GM12878 (cell line): ENCODE measurements at regions of chr11 and their contacts with region 1.

Region 1: GRCh38 chr11:3929649-3930048 is 74.2 kb downstream of the STIM1 start:
- DNase-seq: no peak
- ATAC-seq: no peak
- H3K4me3 ChIP-seq: no peak overlapping the region
- H3K27ac ChIP-seq: no peak overlapping the region
- H3K4me1 ChIP-seq: peaks cover 14% of the 10 kb centered on the region
- H3K27me3 ChIP-seq: no peaks in the 10 kb centered on the region
- CTCF ChIP-seq: no peak
- EP300 ChIP-seq: no peak
- POLR2A ChIP-seq: no peak
- RAD21 ChIP-seq: no peak

Region 2: DNA sequence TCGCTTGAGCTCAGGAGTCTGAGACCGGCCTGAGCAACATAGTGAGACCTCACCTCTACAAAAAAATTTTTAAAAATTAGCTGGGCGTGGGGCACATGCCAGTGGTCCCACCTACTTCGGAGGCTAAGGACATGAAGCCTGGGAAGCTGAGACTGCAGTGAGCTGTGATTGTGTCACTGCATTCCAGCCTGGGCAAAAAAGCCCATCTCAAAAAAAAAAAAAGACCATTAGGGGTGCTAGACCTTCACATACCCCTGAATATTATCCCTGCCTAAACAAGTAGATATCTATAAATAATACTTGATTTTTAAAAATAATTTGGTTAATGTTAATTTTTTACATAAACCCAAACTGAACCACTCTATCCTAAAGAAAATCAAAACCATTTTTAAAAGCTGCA is 156.5 kb before region 1 on chr11:
- CTCF ChIA-PET with region 1: no interaction called
- POLR2A ChIA-PET with region 1: no interaction called
- RAD21 ChIA-PET with region 1: no interaction called
- SMC1A ChIA-PET with region 1: no interaction called
- in situ Hi-C with region 1: no loop called
- intact Hi-C with region 1: no loop called
- DNase-seq: no peak
- ATAC-seq: no peak
- H3K4me3 ChIP-seq: no peak overlapping the region
- H3K27ac ChIP-seq: no peak overlapping the region
- H3K4me1 ChIP-seq: no peaks in the 10 kb centered on the region
- H3K27me3 ChIP-seq: no peaks in the 10 kb centered on the region
- CTCF ChIP-seq: no peak
- EP300 ChIP-seq: no peak
- POLR2A ChIP-seq: no peak
- RAD21 ChIP-seq: no peak

Region 3: DNA sequence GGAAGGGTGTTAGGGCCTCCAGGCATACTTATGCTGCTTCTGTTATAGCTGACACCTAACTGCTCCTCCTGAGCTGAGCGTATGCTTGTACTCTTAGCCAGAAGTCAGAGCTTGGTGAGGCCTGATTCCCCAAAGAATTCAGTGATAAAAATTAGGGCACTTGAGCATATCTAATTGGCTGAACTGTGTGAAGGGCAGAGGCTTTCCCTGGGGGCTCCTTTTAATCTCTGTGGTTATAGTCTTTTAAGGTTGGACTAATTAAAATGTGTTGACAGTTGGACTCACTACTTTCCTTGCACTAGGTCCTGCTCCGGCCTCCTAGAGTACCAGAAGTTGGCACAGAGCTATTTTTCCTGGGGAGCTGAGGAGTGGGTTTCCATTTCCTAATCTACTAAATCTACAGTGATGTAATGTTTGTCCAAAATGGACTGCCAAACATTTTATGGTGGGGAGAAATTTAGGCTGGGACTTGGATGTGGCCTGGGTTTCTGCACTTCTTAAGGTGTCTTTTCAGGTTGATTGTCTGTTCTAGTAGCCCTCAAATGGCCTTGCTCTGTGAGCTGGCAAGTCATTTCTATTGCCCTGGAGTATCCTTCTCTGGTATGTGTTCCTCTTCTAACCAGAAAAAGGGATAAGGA is 55.8 kb before region 1 on chr11:
- CTCF ChIA-PET with region 1: interaction called, 11 read pairs
- POLR2A ChIA-PET with region 1: no interaction called
- RAD21 ChIA-PET with region 1: interaction called, 3 read pairs
- SMC1A ChIA-PET with region 1: interaction called, 14 read pairs
- in situ Hi-C with region 1: no loop called
- intact Hi-C with region 1: no loop called
- DNase-seq: no peak
- ATAC-seq: no peak
- H3K4me3 ChIP-seq: no peak overlapping the region
- H3K27ac ChIP-seq: no peak overlapping the region
- H3K4me1 ChIP-seq: peaks cover 50% of the 10 kb centered on the region
- H3K27me3 ChIP-seq: no peaks in the 10 kb centered on the region
- CTCF ChIP-seq: no peak
- EP300 ChIP-seq: no peak
- POLR2A ChIP-seq: no peak
- RAD21 ChIP-seq: no peak

Region 4: GRCh38 chr11:3905080-3905953 is 24.3 kb before region 1 on chr11:
- CTCF ChIA-PET with region 1: interaction called, 7 read pairs
- POLR2A ChIA-PET with region 1: no interaction called
- RAD21 ChIA-PET with region 1: interaction called, 7 read pairs
- SMC1A ChIA-PET with region 1: interaction called, 29 read pairs
- in situ Hi-C with region 1: no loop called
- intact Hi-C with region 1: no loop called
- DNase-seq: no peak
- ATAC-seq: peak; percentile 89
- H3K4me3 ChIP-seq: no peak overlapping the region
- H3K27ac ChIP-seq: no peak overlapping the region
- H3K4me1 ChIP-seq: peaks cover 51% of the 10 kb centered on the region
- H3K27me3 ChIP-seq: no peaks in the 10 kb centered on the region
- CTCF ChIP-seq: no peak
- EP300 ChIP-seq: no peak
- POLR2A ChIP-seq: no peak
- RAD21 ChIP-seq: no peak

Region 5: GRCh38 chr11:3959015-3959919 is 29.6 kb after region 1 on chr11:
- CTCF ChIA-PET with region 1: interaction called, 29 read pairs
- POLR2A ChIA-PET with region 1: no interaction called
- RAD21 ChIA-PET with region 1: no interaction called
- SMC1A ChIA-PET with region 1: interaction called, 3 read pairs
- in situ Hi-C with region 1: no loop called
- intact Hi-C with region 1: no loop called
- DNase-seq: no peak
- ATAC-seq: peak; percentile 89
- H3K4me3 ChIP-seq: no peak overlapping the region
- H3K27ac ChIP-seq: no peak overlapping the region
- H3K4me1 ChIP-seq: peaks cover 4% of the 10 kb centered on the region; the same call in 1 of the 2 replicates
- H3K27me3 ChIP-seq: no peaks in the 10 kb centered on the region
- CTCF ChIP-seq: peak; percentile 25 to 32 (median 30); a peak in 3 of 6 replicates
- EP300 ChIP-seq: no peak
- POLR2A ChIP-seq: no peak
- RAD21 ChIP-seq: peak; percentile 41; the same call in 1 of the 2 replicates

Region 6: GRCh38 chr11:4381901-4382300 is 452.3 kb after region 1 on chr11:
- CTCF ChIA-PET with region 1: no interaction called
- POLR2A ChIA-PET with region 1: no interaction called
- RAD21 ChIA-PET with region 1: no interaction called
- SMC1A ChIA-PET with region 1: no interaction called
- in situ Hi-C with region 1: no loop called
- intact Hi-C with region 1: no loop called
- DNase-seq: no peak
- ATAC-seq: no peak
- H3K4me3 ChIP-seq: no peak overlapping the region
- H3K27ac ChIP-seq: no peak overlapping the region
- H3K4me1 ChIP-seq: no peaks in the 10 kb centered on the region
- H3K27me3 ChIP-seq: no peaks in the 10 kb centered on the region
- CTCF ChIP-seq: no peak
- EP300 ChIP-seq: no peak
- POLR2A ChIP-seq: no peak
- RAD21 ChIP-seq: no peak

Region 7: GRCh38 chr11:5749836-5750235 is 1820.2 kb after region 1 on chr11:
- CTCF ChIA-PET with region 1: no interaction called
- POLR2A ChIA-PET with region 1: no interaction called
- RAD21 ChIA-PET with region 1: no interaction called
- SMC1A ChIA-PET with region 1: no interaction called
- in situ Hi-C with region 1: no loop called
- intact Hi-C with region 1: no loop called
- DNase-seq: no peak
- ATAC-seq: no peak
- H3K4me3 ChIP-seq: no peak overlapping the region
- H3K27ac ChIP-seq: no peak overlapping the region
- H3K4me1 ChIP-seq: no peaks in the 10 kb centered on the region
- H3K27me3 ChIP-seq: no peaks in the 10 kb centered on the region
- CTCF ChIP-seq: no peak
- EP300 ChIP-seq: no peak
- POLR2A ChIP-seq: no peak
- RAD21 ChIP-seq: no peak